Dorsolateral prefrontal cortex (tissue), 120 donors: ENCODE measurements at regions of chr7 and their contacts with region 1.

Region 1: DNA sequence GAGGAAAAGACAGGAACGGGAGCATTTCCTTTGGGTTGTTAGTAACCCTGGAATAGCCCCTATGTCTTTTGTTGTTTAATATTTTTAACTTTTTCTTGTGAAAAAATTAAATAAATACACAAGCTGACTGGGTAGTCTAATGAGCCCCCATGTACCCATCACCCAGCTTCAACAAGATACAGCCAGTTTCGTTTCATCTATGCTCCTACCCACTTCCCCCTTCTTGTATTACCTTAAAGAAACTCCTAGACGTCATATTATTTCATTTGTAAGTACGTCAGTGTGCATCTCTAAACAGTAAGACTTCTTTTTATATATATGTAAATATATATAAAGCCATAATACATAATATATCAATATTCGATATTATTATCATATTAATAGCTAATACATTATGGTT is 42.8 kb upstream of the NUB1 start:
- DNase-seq: no peak
- H3K4me3 ChIP-seq: no peak overlapping the region
- H3K27ac ChIP-seq: no peak overlapping the region
- H3K27me3 ChIP-seq: peaks cover 0 to 10% (median 0%) of the 10 kb centered on the region in 45 donors
- CTCF ChIP-seq: no peak

Region 2: GRCh38 chr7:151244196-151244840 is 54.4 kb before region 1 on chr7:
- intact Hi-C with region 1: loop called (anchors 1 to 2 kb)
- DNase-seq: peak in 6 of 10 donors; percentile 45 to 74 (median 66)
- H3K4me3 ChIP-seq: peak overlapping the region in 29 of 59 donors; percentile 4 to 61 (median 49)
- H3K27ac ChIP-seq: peak overlapping the region in 35 of 59 donors; percentile 0 to 75 (median 51)
- H3K27me3 ChIP-seq: no peaks in the 10 kb centered on the region
- CTCF ChIP-seq: peak; percentile 68 to 93 (median 86)